HepG2 (cell line): ENCODE measurements at regions of chr6 and their contacts with region 1.

Region 1: GRCh38 chr6:138647006-138647405 is 126.6 kb upstream of the CCDC28A start:
- DNase-seq: no peak
- ATAC-seq: no peak
- H3K4me3 ChIP-seq: no peak overlapping the region
- H3K27ac ChIP-seq: no peak overlapping the region
- H3K4me1 ChIP-seq: peaks cover 12% of the 10 kb centered on the region
- H3K27me3 ChIP-seq: no peaks in the 10 kb centered on the region
- CTCF ChIP-seq: no peak
- EP300 ChIP-seq: no peak
- POLR2A ChIP-seq: no peak
- RAD21 ChIP-seq: no peak

Region 2: GRCh38 chr6:138572167-138572865 is 74.7 kb before region 1 on chr6:
- CTCF ChIA-PET with region 1: no interaction called
- POLR2A ChIA-PET with region 1: no interaction called
- in situ Hi-C with region 1: no loop called
- intact Hi-C with region 1: no loop called
- DNase-seq: peak; percentile 97
- ATAC-seq: peak; percentile 94
- H3K4me3 ChIP-seq: peak overlapping the region; percentile 60 to 84 (median 64)
- H3K27ac ChIP-seq: peak overlapping the region; percentile 79
- H3K4me1 ChIP-seq: peaks cover 43% of the 10 kb centered on the region
- H3K27me3 ChIP-seq: no peaks in the 10 kb centered on the region; a peak in 2 of 5 replicates
- CTCF ChIP-seq: no peak
- EP300 ChIP-seq: 0 out of 4 replicates have a peak, but pooled peaks of 1 of the 2 experiments have one; percentile 37
- POLR2A ChIP-seq: peak; percentile 93 to 98
- RAD21 ChIP-seq: no peak

Region 3: GRCh38 chr6:138622967-138623366 is 24.0 kb before region 1 on chr6:
- CTCF ChIA-PET with region 1: no interaction called
- POLR2A ChIA-PET with region 1: no interaction called
- in situ Hi-C with region 1: no loop called
- intact Hi-C with region 1: no loop called
- DNase-seq: no peak
- ATAC-seq: no peak
- H3K4me3 ChIP-seq: no peak overlapping the region
- H3K27ac ChIP-seq: no peak overlapping the region
- H3K4me1 ChIP-seq: peaks cover 7% of the 10 kb centered on the region; the same call in 1 of the 2 replicates
- H3K27me3 ChIP-seq: no peaks in the 10 kb centered on the region
- CTCF ChIP-seq: no peak
- EP300 ChIP-seq: no peak
- POLR2A ChIP-seq: no peak
- RAD21 ChIP-seq: no peak

Region 4: DNA sequence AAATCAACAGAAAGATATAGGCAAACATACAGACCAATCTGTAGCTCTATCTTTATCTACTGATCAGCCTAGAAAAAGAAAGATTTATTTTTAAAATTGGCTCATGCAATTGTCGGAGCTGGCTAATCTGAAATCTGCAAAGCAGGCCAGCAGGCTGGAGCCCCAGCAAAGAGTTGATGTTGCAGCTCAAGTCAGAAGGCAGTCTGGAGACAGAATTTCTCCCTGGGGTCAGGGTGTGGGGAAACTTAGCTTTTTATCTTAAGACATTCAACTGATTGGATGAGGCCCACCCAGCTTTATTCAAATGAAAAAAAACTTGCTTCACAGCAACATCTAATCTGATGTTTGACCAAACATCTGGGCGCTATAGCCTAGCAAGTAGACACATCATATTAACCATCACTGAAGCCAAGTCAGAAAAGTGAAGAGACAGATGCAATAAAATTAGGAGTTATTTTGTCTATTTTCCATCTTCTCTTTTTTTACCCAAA is 17.7 kb after region 1 on chr6:
- CTCF ChIA-PET with region 1: no interaction called
- POLR2A ChIA-PET with region 1: no interaction called
- in situ Hi-C with region 1: no loop called
- intact Hi-C with region 1: loop called (anchors 1 kb)
- DNase-seq: no peak
- ATAC-seq: no peak
- H3K4me3 ChIP-seq: no peak overlapping the region
- H3K27ac ChIP-seq: no peak overlapping the region
- H3K4me1 ChIP-seq: peaks cover 29% of the 10 kb centered on the region
- H3K27me3 ChIP-seq: no peaks in the 10 kb centered on the region
- CTCF ChIP-seq: no peak
- EP300 ChIP-seq: no peak
- POLR2A ChIP-seq: no peak
- RAD21 ChIP-seq: no peak